ENCODE measurements at regions of chr1 and their contacts with region 1.

Region 1: GRCh38 chr1:161098210-161099068 is at the start of gene KLHDC9:
- DNase-seq: no peak
- H3K4me3 ChIP-seq: peak within 1 kb of the TSS; percentile 61
- CTCF ChIP-seq: peak; percentile 38

Region 2: GRCh38 chr1:160997323-160998038 is 101.0 kb before region 1 on chr1:
- CTCF ChIA-PET with region 1: interaction called, 146 read pairs
- POLR2A ChIA-PET with region 1: no interaction called
- DNase-seq: no peak
- H3K4me3 ChIP-seq: no peak overlapping the region
- CTCF ChIP-seq: peak; percentile 68

Region 3: DNA sequence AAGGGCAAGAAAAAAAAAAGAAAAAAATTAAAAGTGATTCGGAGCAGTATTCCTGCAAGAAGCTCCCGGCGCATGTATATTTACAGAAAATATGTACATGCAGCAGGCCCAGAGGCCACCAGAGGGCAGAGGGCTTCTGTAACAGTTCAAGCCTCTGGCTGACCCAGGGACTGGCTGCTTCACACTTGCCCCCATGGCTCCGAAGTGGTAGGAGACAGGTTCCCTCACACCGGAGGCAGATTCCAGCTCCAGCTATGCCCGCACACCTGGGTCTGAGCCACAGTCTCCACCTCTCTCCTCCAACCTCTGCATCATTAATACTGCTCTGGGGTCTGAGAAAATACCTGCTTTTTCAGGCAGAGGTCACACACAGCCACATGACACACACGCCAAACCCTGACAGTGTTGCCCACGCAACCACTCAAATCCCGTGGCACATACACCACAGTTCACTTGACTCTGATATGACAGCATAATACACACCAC is 26.5 kb before region 1 on chr1:
- CTCF ChIA-PET with region 1: interaction called, 100 read pairs
- POLR2A ChIA-PET with region 1: no interaction called
- DNase-seq: no peak
- H3K4me3 ChIP-seq: no peak overlapping the region
- CTCF ChIP-seq: peak; percentile 50

Region 4: DNA sequence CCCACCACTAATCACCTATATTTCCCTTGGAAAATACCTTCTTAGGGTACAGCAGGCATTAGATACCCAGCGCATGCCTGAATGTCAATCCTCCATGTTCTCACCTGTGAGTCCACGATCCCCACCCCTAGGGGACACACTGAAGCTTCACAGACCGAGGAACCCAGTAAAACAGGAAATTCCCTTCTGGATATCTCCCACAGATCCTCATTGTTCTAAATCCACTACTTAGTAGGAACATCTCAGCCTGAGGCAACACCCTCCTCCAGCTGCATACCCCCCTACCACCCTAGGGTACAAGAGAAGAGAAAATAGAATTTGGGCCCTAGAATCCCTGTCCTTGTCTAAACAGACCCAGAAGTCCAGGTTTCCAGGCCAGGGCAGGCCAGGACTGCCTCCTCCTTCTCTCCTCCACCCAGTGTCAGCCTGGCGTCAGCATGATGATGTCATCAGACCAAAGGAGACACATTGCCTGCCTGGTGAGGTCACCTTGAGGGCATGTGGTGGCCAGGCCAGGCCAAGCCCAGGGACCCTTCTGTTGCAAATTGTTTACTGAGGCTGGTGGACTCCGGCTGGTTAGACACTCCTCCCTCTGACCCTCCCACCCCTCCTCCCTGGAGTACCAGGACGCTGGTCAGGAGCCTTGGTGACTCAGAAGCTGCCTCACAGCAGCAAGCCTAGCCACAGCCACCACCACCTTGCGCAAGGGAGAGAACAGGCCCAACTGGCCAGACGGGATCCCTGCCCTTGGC is 15.3 kb before region 1 on chr1:
- CTCF ChIA-PET with region 1: interaction called, 82 read pairs
- POLR2A ChIA-PET with region 1: interaction called, 3 read pairs
- DNase-seq: no peak
- H3K4me3 ChIP-seq: no peak overlapping the region
- CTCF ChIP-seq: no peak

Region 5: GRCh38 chr1:161117759-161118581 is 19.5 kb after region 1 on chr1 and contains the starts of genes NIT1 and PFDN2:
- CTCF ChIA-PET with region 1: interaction called, 57 read pairs
- POLR2A ChIA-PET with region 1: no interaction called
- DNase-seq: no peak
- H3K4me3 ChIP-seq: peak within 1 kb of the TSS; percentile 98
- CTCF ChIP-seq: no peak

Region 6: GRCh38 chr1:161185282-161185682 is 86.8 kb after region 1 on chr1:
- CTCF ChIA-PET with region 1: no interaction called
- POLR2A ChIA-PET with region 1: no interaction called
- DNase-seq: no peak
- H3K4me3 ChIP-seq: no peak overlapping the region
- CTCF ChIP-seq: no peak